Natural killer cell (primary cell): ENCODE measurements at regions of chr1 and their contacts with region 1.

Region 1: DNA sequence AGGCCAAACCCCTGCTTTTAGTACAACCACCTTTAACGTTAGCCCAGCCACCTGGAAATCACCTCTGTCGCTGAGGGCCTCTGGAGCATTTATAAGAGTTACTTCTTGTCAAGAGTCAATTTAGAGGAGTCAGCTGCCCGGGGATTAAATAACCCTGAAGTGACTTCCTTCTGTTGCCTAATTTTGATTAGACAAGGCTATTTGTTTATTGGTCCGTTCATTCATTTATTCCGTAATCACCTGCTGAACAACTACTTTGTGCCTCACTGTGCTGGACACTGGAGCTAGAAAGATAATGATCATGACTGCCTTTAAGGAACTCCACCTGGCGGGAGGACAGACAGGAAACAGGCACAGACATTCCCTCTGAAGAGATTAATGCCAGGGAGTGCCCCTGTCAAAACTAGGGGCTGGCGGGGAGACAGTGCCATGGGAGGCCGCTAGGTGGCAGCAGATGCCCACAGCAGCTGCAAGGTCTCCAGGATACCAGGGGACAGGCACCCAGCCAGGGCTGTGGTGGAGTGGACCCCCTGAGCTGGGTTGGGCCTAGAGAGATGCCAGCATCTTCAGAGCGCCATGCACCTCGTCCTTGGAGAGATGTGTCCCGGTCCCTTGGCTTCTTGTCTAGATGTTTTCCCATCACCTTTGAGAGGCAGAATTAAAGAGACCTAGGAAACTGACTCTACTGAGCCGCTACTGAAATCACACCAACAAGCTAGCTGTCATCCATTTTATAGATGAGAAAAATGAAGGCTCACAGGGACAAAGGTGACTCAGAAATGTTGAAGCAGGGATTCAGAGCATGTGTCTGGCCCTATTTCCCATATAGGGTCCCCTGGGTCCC is 3.7 kb downstream of the REN start:
- DNase-seq: peak; percentile 77 to 86
- ATAC-seq: peak; percentile 81 to 99 (median 97)
- H3K4me3 ChIP-seq: no peak overlapping the region
- H3K4me3 Mint-ChIP-seq: no peak overlapping the region
- H3K27ac ChIP-seq: no peak overlapping the region
- H3K27ac Mint-ChIP-seq: no peak overlapping the region
- H3K4me1 ChIP-seq: no peaks in the 10 kb centered on the region
- H3K4me1 Mint-ChIP-seq: no peaks in the 10 kb centered on the region
- H3K27me3 ChIP-seq: no peaks in the 10 kb centered on the region
- H3K27me3 Mint-ChIP-seq: peaks cover 0 to 4% of the 10 kb centered on the region in 2 donors
- CTCF ChIP-seq: peak; percentile 98

Region 2: DNA sequence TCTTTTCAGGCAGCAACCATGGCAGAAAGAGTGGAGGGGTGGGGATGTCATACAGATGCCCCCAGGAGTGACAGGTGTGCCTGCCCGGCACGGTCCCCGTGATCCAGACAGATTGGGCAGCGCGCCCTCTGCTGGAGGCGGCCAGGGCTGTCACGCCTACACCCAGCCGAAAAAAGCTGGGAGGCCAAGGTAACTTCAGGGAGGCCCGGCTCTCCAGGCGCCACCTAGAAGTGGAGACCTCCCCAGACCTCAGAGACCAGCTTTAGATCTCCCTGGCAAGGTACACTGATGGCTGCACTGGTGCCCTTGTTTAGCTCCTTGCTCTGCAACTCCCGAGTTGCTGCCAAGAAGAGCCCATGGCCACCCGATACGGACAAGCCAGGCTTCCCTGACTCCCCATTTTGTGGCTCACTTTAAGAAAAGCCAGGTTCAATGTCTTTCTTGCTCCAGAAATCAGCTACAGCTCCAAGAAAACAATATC is 44.7 kb after region 1 on chr1:
- intact Hi-C with region 1: loop called (anchors 1 kb)
- DNase-seq: peak; percentile 71 to 80
- ATAC-seq: peak; percentile 84 to 98 (median 95)
- H3K4me3 ChIP-seq: no peak overlapping the region
- H3K4me3 Mint-ChIP-seq: no peak overlapping the region
- H3K27ac ChIP-seq: no peak overlapping the region
- H3K27ac Mint-ChIP-seq: no peak overlapping the region
- H3K4me1 ChIP-seq: peaks cover 4% of the 10 kb centered on the region
- H3K4me1 Mint-ChIP-seq: no peaks in the 10 kb centered on the region
- H3K27me3 ChIP-seq: peaks cover 2% of the 10 kb centered on the region
- H3K27me3 Mint-ChIP-seq: peaks cover 30 to 48% of the 10 kb centered on the region in 2 donors
- CTCF ChIP-seq: peak; percentile 94

Region 3: DNA sequence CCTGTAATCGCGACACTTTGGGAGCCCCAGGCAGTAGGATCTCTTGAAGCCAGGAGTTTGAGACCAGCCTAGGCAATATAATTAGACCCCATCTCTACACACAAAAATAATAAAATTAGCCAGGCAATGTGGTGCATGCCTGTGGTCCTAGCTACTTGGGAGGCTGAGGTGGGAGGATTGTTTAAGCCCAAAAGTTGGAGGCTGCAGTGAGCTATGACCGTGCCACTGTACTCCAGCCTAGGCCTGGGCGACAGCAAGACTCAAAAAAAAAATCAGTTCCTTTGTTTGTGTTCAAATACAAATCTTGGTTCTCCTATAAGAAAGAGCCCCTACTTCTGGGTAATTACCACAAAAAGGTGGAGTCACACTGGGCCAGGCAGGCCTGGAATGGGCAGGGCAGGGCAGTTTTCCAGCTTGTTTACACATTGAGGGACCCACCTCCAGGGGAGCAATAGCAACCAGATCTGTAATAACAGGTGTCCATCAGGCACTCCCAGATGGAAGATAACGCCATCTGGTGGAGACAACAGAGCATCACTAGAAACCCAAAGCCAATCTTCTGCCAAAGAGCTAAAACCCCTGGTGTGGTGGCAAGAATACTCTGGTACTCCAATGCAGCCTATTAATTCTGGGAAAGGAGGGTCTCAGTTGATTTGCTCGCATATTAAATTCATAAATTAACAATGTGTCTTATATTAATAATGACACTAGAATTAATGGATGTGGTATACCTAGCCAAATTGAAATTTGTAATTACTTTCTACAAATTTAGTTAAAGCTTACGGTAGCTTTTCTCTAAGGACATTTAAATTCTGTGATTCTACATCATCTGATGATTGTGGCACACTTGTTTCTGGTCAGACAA is 236.0 kb after region 1 on chr1:
- intact Hi-C with region 1: loop called (anchors 1 kb)
- DNase-seq: peak in 1 of 2 donors; percentile 85
- ATAC-seq: peak; percentile 74 to 92 (median 91)
- H3K4me3 ChIP-seq: no peak overlapping the region
- H3K4me3 Mint-ChIP-seq: no peak overlapping the region
- H3K27ac ChIP-seq: peak overlapping the region; percentile 8
- H3K27ac Mint-ChIP-seq: peak overlapping the region; percentile 65 to 66
- H3K4me1 ChIP-seq: no peaks in the 10 kb centered on the region
- H3K4me1 Mint-ChIP-seq: peaks cover 7% of the 10 kb centered on the region in 2 donors
- H3K27me3 ChIP-seq: no peaks in the 10 kb centered on the region
- H3K27me3 Mint-ChIP-seq: no peaks in the 10 kb centered on the region
- CTCF ChIP-seq: peak; percentile 84